ENCODE measurements at regions of chr3 and their contacts with region 1.

Region 1: DNA sequence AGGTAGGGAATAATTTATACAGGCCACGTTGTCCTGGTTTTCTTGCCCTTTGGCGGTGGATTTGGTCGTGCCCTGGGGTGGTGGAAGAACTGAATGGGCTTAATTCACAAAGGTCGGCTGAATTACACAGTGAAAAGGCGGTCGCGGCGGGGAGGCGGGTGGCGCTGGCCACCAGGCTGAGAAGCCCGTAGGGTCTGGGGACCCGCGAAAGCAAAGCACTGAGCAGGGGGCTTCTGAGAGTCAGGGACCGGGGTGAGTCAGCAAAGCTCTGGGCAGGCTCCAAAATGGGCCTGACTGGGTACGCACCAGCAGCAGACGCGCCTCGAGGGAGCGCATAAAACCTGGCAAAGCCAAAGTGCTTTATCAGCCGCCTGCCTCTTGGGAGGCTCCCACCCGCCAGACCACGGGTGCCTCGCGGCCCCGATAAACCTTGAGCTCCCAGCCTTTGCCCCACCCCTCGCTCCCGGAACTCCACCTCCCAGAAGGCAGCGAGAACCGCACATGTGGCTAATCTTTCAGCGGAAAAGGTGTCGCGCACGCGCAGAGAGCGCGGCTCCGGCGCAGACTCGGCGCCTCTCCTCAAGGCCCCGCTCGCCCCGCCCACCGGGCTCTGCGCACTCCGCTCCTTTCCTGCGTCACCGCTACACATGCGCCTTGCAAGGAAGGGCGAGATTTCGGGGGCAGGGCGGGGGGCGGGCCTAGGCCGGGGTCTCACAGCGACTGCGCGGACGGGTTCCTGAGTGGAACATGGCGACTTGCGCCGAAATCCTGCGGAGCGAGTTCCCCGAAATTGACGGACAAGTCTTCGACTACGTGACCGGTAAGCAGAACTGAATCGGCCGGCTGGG is at the start of gene ABCF3:
- DNase-seq: peak; percentile 98
- H3K4me3 Mint-ChIP-seq: peak within 1 kb of the TSS; percentile 95
- H3K27ac Mint-ChIP-seq: peak within 1 kb of the TSS; percentile 93
- H3K4me1 Mint-ChIP-seq: peaks cover 19% of the 10 kb centered on the region
- H3K27me3 Mint-ChIP-seq: no peaks in the 10 kb centered on the region
- CTCF ChIP-seq: no peak
- total RNA-seq, gene ABCF3: 62.7 and 73.9 TPM in 2 replicates

Region 2: GRCh38 chr3:183895296-183895695 is 290.4 kb before region 1 on chr3:
- CTCF ChIA-PET with region 1: no interaction called
- POLR2A ChIA-PET with region 1: interaction called, 4 read pairs
- intact Hi-C with region 1: loop called (anchors 1 kb)
- DNase-seq: peak; percentile 60
- H3K4me3 Mint-ChIP-seq: no peak overlapping the region
- H3K27ac Mint-ChIP-seq: no peak overlapping the region
- H3K4me1 Mint-ChIP-seq: no peaks in the 10 kb centered on the region
- H3K27me3 Mint-ChIP-seq: no peaks in the 10 kb centered on the region
- CTCF ChIP-seq: peak; percentile 82

Region 3: DNA sequence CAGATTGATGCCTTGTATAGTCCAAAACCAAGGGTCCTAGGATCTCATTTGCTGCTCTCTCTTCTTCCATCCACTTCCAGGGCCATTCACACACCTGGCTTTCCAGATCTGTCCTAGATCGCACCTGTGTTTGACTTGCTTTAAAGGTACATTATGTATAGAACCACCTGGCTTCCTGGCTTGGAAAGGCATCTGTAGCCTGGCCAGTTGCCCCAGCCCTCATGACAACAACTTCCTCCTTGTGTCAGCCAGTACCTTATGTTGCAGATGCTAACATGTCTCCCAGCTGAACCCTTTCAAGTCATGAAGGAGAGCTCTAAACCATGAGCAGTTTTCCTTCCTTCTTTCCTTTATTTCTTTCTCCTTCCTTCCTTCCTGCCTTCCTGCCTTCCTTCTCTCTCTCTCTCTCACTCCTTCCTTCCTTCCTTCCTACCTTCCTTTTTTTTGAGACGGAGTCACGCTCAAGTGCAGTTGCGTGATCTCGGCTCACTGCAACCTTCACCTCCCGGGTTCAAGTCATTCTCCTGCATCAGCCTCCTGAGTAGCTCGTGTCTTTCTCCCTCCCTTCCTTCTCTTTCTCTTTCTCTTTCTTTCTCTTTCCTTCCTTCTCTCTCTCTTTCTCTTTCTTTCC is 135.4 kb before region 1 on chr3:
- CTCF ChIA-PET with region 1: no interaction called
- POLR2A ChIA-PET with region 1: no interaction called
- intact Hi-C with region 1: no loop called
- DNase-seq: no peak
- H3K4me3 Mint-ChIP-seq: no peak overlapping the region
- H3K27ac Mint-ChIP-seq: no peak overlapping the region
- H3K4me1 Mint-ChIP-seq: no peaks in the 10 kb centered on the region
- H3K27me3 Mint-ChIP-seq: peaks cover 35% of the 10 kb centered on the region
- CTCF ChIP-seq: no peak

Region 4: GRCh38 chr3:184154885-184155643 is 30.6 kb before region 1 on chr3 and contains the start of gene DVL3:
- CTCF ChIA-PET with region 1: interaction called, 3 read pairs
- POLR2A ChIA-PET with region 1: interaction called, 13 read pairs
- intact Hi-C with region 1: no loop called
- DNase-seq: peak; percentile 60
- H3K4me3 Mint-ChIP-seq: peak within 1 kb of the TSS; percentile 97
- H3K27ac Mint-ChIP-seq: peak within 1 kb of the TSS; percentile 93
- H3K4me1 Mint-ChIP-seq: peaks cover 13% of the 10 kb centered on the region
- H3K27me3 Mint-ChIP-seq: no peaks in the 10 kb centered on the region
- CTCF ChIP-seq: no peak
- total RNA-seq, gene DVL3: 73.4 and 74.5 TPM in 2 replicates

Region 5: GRCh38 chr3:184174646-184175492 is 10.8 kb before region 1 on chr3 and contains the start of gene AP2M1:
- CTCF ChIA-PET with region 1: no interaction called
- POLR2A ChIA-PET with region 1: interaction called, 26 read pairs
- intact Hi-C with region 1: no loop called
- DNase-seq: peak; percentile 99
- H3K4me3 Mint-ChIP-seq: peak within 1 kb of the TSS; percentile 100
- H3K27ac Mint-ChIP-seq: peak within 1 kb of the TSS; percentile 95
- H3K4me1 Mint-ChIP-seq: peaks cover 29% of the 10 kb centered on the region
- H3K27me3 Mint-ChIP-seq: no peaks in the 10 kb centered on the region
- CTCF ChIP-seq: no peak
- total RNA-seq, gene AP2M1: 280 and 301 TPM in 2 replicates

Region 6: GRCh38 chr3:184196536-184196935 is 10.9 kb after region 1 on chr3:
- CTCF ChIA-PET with region 1: no interaction called
- POLR2A ChIA-PET with region 1: interaction called, 15 read pairs
- intact Hi-C with region 1: no loop called
- DNase-seq: no peak
- H3K4me3 Mint-ChIP-seq: no peak overlapping the region
- H3K27ac Mint-ChIP-seq: no peak overlapping the region
- H3K4me1 Mint-ChIP-seq: no peaks in the 10 kb centered on the region
- H3K27me3 Mint-ChIP-seq: no peaks in the 10 kb centered on the region
- CTCF ChIP-seq: no peak